ENCODE measurements at regions of chr7 and their contacts with region 1.

Region 1: DNA sequence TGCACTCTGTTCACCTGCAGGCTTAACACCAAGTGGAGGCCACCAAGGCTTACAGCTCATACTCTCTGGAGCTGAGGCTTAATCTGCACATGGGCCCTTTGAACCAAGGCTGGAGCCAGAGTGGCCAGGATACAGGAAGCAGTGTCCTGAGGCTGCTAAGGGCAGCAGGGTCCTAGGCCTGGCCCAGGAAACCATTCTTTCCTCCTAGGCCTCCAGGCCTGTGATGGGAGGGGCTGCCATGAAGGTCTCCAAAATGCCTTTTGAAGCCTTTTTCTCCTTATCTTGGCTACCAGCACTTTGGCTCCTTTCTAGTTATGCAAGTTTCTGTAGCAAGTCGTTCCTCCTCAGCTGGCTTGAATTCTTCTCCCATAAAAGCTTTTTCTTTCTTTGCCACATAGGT is 68.0 kb upstream of the GNAI1 start:
- DNase-seq: no peak
- H3K4me3 ChIP-seq: no peak overlapping the region
- H3K27ac ChIP-seq: no peak overlapping the region
- H3K4me1 ChIP-seq: no peaks in the 10 kb centered on the region
- H3K27me3 ChIP-seq: no peaks in the 10 kb centered on the region
- CTCF ChIP-seq: no peak

Region 2: GRCh38 chr7:80659120-80660055 is 592.7 kb after region 1 on chr7:
- CTCF ChIA-PET with region 1: no interaction called
- POLR2A ChIA-PET with region 1: no interaction called
- intact Hi-C with region 1: loop called (anchors 5 kb)
- DNase-seq: peak; percentile 45
- H3K4me3 ChIP-seq: no peak overlapping the region
- H3K27ac ChIP-seq: no peak overlapping the region
- H3K4me1 ChIP-seq: no peaks in the 10 kb centered on the region
- H3K27me3 ChIP-seq: no peaks in the 10 kb centered on the region
- CTCF ChIP-seq: peak; percentile 78